Mucosa of descending colon (tissue), 3 donors: ENCODE measurements at regions of chr1 and their contacts with region 1.

Region 1: DNA sequence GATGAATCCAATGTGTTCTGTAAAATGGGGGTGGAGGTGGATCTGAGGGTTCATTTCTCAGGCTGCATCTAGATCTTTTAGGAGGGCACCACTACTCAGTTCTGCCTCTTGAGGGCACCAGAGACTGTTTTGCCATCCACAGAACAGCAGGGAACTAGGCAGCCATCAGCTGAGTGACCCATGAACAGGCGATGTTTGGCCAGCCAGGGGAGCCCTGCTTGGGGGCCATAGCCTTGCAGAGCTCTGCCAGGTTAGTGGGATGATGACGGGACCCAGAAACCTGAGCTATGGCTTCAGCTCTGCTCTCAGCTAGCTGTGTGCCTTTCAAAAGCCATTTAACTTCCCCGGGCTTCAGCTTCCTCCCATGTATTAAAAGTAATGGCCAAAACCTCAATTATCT is 13.4 kb upstream of the NOS1AP start:
- DNase-seq: peak in 2 of 3 donors; percentile 58 to 82
- ATAC-seq: peak; percentile 94
- H3K4me3 ChIP-seq: no peak overlapping the region
- H3K4me1 ChIP-seq: no peaks in the 10 kb centered on the region
- CTCF ChIP-seq: peak; percentile 62

Region 2: GRCh38 chr1:162276493-162276892 is 220.4 kb after region 1 on chr1:
- intact Hi-C with region 1: loop called (anchors 5 kb)
- DNase-seq: peak in 1 of 3 donors; percentile 23
- ATAC-seq: peak; percentile 65
- H3K4me3 ChIP-seq: no peak overlapping the region
- H3K4me1 ChIP-seq: no peaks in the 10 kb centered on the region
- CTCF ChIP-seq: no peak